SK-N-SH (cell line): ENCODE measurements at regions of chr5 and their contacts with region 1.

Region 1: DNA sequence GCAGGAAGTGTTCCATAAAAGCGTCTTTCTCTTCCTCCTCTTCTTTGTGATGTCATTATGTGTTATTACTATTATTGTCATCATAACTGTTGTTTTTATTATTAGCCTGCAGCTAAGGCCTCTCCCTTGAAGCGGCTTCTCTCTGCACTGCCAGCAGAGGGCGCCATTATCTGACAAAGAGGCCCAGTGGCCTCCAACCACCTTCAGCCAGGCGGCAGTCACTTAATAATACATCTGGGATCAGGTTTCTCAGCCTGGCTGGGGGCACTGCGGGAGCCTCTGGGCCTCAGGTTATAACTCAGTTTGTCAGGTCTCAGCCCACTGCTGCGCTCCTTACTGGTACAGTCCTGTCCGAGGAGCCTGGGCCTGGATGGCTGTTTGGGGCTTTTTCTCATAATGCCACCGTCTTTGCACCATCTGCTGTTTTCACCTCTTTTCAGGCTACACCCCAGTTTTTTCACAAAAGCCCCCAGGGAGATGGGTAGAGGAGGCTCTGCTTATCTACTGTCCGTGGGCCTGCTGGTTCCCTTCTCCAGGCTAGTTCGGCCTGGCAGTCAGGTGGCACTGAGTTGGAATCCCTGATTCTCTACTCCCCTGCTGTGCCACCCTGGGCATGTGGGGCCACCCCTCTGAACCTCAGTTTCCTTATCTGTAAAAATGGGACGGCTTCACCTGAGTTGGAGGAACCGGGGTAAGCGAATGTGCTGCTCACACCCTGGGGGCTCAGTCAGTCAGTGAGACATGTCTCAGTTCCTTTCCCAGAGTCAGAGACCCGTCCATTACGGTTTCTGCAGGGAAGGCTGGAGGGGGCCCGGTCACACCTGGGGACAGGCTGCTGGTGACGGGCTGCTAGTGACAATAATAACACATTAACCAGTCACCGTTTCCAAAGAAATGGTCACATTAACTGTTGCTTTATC is 282.1 kb downstream of the NSG2 start:
- DNase-seq: peak; percentile 77
- H3K4me3 ChIP-seq: no peak overlapping the region; a peak in 1 of 4 replicates
- H3K27ac ChIP-seq: peak overlapping the region in 1 of 2 experiments; percentile 95; a peak in 2 of 4 replicates
- H3K4me1 ChIP-seq: peaks cover 17 to 50% of the 10 kb centered on the region in 2 experiments
- H3K27me3 ChIP-seq: no peaks in the 10 kb centered on the region
- CTCF ChIP-seq: peak; percentile 97
- EP300 ChIP-seq: peak in 1 of 2 experiments; percentile 23; a peak in 1 of 4 replicates
- RAD21 ChIP-seq: peak; percentile 90

Region 2: GRCh38 chr5:174229514-174230370 is 97.8 kb before region 1 on chr5:
- CTCF ChIA-PET with region 1: no interaction called
- POLR2A ChIA-PET with region 1: no interaction called
- DNase-seq: no peak
- H3K4me3 ChIP-seq: no peak overlapping the region
- H3K27ac ChIP-seq: peak overlapping the region; percentile 3 to 50
- H3K4me1 ChIP-seq: peaks cover 0 to 23% of the 10 kb centered on the region in 2 experiments; a peak in 2 of 4 replicates
- H3K27me3 ChIP-seq: no peaks in the 10 kb centered on the region
- CTCF ChIP-seq: no peak
- EP300 ChIP-seq: no peak
- RAD21 ChIP-seq: no peak

Region 3: DNA sequence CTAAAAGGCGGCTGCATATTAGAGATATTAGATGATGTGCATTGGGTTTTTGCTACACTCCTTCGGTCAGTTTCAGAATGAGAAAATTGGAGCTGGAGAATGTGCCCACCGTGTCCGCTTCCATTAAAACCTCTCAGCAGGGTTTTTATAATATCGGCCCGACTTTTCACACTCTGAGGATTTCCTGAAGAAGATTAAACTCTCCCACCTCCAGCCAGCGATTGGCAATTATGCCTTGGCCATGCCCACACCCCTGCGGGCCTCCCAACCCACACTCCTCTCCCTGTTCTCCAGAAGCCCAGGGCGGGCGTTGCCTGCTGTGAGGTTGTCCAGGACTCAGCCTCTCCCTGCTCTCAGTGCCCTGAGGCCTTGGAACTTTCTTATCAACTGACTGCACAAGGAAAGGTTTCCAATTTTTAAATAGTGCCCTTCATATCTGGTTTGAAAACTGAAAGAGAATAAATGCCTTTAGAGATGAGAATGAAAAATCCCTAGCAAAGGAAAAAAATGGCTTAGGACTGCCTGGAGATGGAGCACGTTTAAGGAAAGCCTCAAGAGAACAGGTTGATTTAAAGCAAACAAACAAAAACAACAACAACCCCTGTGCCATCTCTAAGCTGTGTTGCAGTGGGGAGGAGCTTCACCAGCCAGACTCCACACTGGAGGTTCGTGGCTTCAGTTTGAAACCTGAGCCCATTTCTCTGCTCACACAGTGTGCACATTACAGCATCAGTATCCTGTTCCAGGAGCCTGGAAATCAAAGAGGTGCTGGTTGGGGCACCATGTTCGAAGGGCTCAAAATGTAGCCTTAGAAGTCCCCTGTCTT is 10.8 kb after region 1 on chr5:
- CTCF ChIA-PET with region 1: interaction called, 10 read pairs
- POLR2A ChIA-PET with region 1: interaction called, 3 read pairs
- DNase-seq: peak; percentile 77
- H3K4me3 ChIP-seq: 0 out of 4 replicates have a peak overlapping the region, but pooled peaks of 1 of the 2 experiments have one; percentile 3
- H3K27ac ChIP-seq: peak overlapping the region; percentile 59 to 96
- H3K4me1 ChIP-seq: peaks cover 7 to 38% of the 10 kb centered on the region in 2 experiments; a peak in 2 of 4 replicates
- H3K27me3 ChIP-seq: no peaks in the 10 kb centered on the region
- CTCF ChIP-seq: no peak
- EP300 ChIP-seq: peak in 1 of 2 experiments; percentile 61; a peak in 1 of 4 replicates
- RAD21 ChIP-seq: no peak

Region 4: GRCh38 chr5:174409070-174409469 is 81.5 kb after region 1 on chr5:
- CTCF ChIA-PET with region 1: interaction called, 12 read pairs
- POLR2A ChIA-PET with region 1: interaction called, 3 read pairs
- DNase-seq: no peak
- H3K4me3 ChIP-seq: no peak overlapping the region
- H3K27ac ChIP-seq: no peak overlapping the region
- H3K4me1 ChIP-seq: peaks cover 17% of the 10 kb centered on the region in 2 experiments
- H3K27me3 ChIP-seq: no peaks in the 10 kb centered on the region
- CTCF ChIP-seq: peak; percentile 45
- EP300 ChIP-seq: no peak
- RAD21 ChIP-seq: no peak

Region 5: DNA sequence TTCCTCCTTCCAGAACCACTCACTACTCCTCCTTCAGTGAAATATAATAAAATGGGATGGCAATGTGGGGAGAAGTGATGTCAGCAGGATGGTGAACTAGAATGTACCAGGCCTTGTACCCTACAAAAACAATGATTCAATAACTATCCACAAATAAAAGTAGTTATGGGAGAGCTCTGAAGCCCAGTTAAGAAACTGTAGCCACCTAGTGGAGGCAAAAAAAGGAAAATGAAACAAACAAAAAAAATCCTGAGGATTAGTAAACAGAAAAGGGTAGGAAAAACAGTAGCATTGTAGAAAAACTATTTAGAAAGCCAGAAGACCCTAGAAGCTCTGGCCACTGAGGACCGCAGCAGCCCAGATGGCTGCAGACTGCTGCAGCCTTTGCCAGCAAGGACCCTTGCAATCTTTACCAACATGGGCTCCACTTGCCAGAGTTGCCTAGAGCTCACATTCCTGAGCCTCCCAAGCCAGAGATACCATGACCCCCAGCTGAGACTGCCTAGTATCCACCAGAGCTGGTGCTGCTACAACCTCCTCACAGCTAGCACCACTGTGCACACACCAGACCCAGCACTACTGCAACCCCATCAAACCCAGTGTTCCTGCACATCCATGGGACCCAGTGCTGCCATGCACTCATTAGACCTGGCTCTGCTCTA is 137.1 kb after region 1 on chr5:
- CTCF ChIA-PET with region 1: no interaction called
- POLR2A ChIA-PET with region 1: no interaction called
- DNase-seq: no peak
- H3K4me3 ChIP-seq: no peak overlapping the region
- H3K27ac ChIP-seq: no peak overlapping the region
- H3K4me1 ChIP-seq: no peaks in the 10 kb centered on the region
- H3K27me3 ChIP-seq: no peaks in the 10 kb centered on the region
- CTCF ChIP-seq: peak; percentile 41
- EP300 ChIP-seq: no peak
- RAD21 ChIP-seq: no peak

Region 6: GRCh38 chr5:174910245-174910737 is 582.7 kb after region 1 on chr5:
- CTCF ChIA-PET with region 1: no interaction called
- POLR2A ChIA-PET with region 1: no interaction called
- DNase-seq: peak; percentile 90
- H3K4me3 ChIP-seq: peak overlapping the region in 1 of 2 experiments; percentile 43; a peak in 1 of 4 replicates
- H3K27ac ChIP-seq: no peak overlapping the region
- H3K4me1 ChIP-seq: no peaks in the 10 kb centered on the region
- H3K27me3 ChIP-seq: no peaks in the 10 kb centered on the region
- CTCF ChIP-seq: peak; percentile 75
- EP300 ChIP-seq: no peak
- RAD21 ChIP-seq: peak; percentile 86